AG04449 (cell line): ENCODE measurements at regions of chr6 and their contacts with region 1.

Region 1: DNA sequence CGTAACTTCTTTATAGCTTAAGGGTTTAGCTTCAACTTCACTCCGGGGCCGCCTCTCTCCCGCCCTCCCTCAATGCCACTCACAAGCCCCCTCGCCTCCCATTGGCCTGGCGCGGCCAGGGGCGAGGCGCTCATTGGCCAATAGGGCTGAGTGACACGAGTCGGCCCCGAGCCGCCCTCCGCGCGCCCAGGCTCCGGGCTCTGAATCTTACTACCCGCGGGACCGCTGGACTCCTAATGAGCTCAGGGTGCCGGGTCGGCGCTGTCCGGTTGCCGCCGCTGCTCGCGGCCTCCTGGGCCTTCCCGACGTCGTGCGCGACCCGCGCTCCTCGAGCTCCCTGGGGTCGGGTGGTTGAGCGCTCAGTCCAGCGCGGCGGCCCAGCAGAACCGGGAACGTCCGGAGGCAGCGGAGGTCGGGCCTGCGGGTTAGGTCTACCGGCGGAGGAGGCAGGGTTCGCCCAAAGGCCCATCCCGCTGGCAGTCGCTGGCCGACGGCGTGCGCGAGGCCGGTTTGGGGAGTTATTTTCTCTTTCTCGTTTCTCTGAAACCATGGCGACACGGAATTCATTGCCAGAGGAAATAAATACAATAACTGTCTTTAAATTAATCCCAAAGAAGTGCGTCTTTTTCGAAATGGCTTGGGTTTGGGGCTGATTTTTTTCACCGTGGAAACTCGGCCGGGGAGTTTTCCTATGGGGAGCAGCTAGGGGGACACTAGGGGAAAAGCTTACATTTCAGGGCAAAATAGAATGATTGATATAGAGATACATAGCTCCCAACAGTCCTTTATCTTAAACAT is at the start of gene SIM1:
- DNase-seq: peak; percentile 74
- H3K4me3 ChIP-seq: peak within 1 kb of the TSS; percentile 83
- CTCF ChIP-seq: no peak

Region 2: DNA sequence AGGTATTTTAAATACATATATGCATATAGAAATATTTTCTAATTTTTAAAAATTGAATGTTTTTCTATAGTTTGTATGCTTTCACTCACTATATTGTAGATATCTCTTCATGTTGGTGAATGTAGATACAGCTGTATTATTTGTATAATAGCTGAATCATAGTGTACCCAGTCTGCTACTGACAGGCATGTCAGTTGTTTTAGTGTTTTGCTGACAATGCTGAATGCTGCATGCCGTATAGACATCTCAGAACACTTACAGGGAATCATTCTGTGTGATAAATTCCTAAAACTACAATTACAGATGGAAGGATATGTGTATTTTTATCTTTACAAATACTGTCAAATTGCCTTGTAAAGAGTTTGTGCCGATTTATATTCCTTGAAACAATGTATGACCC is 175.8 kb before region 1 on chr6:
- CTCF ChIA-PET with region 1: interaction called, 10 read pairs
- POLR2A ChIA-PET with region 1: no interaction called
- DNase-seq: no peak
- H3K4me3 ChIP-seq: no peak overlapping the region
- CTCF ChIP-seq: no peak

Region 3: GRCh38 chr6:100446115-100447080 is 18.7 kb before region 1 on chr6:
- CTCF ChIA-PET with region 1: interaction called, 22 read pairs
- POLR2A ChIA-PET with region 1: interaction called, 4 read pairs
- DNase-seq: no peak
- H3K4me3 ChIP-seq: no peak overlapping the region
- CTCF ChIP-seq: no peak

Region 4: DNA sequence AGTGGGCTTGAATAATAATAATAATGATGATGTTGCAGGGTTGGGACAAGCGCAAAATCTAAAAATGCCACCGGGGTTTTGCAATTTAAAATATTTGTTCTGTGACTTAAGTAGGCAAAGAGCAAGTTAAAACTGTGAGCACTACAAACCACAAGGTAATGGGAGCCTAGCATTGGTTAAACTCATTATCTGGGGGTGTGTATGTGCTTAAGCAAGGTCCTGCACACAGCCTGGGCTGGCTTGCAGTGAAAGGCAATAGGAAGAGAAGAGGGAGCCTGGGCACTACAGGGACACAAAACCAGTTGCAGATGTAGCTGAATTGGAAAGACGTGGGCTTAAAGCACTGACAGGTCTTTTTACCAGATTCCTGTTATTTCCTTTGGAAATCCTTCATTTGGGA is 12.1 kb before region 1 on chr6:
- CTCF ChIA-PET with region 1: interaction called, 22 read pairs
- POLR2A ChIA-PET with region 1: no interaction called
- DNase-seq: no peak
- H3K4me3 ChIP-seq: no peak overlapping the region
- CTCF ChIP-seq: no peak